ENCODE measurements at regions of chr5 and their contacts with region 1.

Region 1: DNA sequence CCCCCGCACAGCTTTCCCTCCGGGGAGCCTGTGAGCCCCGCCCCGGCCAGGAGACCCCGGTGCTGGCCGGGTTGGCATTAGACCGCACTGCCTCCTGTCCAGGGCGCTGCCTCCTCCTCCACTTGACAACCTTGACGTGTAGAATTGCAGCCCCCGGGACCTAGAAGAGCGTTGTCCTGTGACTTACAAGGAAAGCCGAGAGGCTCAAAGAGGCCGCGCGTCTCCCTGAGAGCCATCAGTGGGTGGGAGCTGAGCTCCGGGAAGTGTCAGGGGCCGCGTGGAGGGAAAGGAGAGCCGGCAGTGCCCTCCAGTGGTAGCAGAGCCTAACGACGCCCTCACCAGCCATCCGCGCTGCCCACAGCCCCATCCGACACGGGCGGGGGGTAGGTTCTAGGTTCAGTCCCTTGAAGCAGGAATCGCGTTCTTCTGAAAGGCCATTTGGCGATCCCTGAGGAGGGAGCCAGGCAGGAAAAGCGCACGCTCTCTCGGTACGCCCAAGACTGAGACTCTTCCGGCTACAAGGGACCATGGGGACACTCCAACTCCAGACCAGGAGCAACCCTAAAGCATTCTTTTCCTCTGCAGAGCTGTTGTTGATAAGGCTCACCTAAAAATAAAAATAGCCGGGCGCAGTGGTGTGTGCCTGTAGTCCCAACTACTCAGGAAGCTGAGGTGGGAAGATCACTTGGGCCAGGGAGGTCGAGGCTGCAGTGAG is 40.6 kb upstream of the SAP30L start:
- DNase-seq: peak; percentile 85
- H3K4me3 ChIP-seq: peak overlapping the region; percentile 32
- H3K27ac ChIP-seq: no peak overlapping the region
- H3K4me1 ChIP-seq: no peaks in the 10 kb centered on the region
- H3K27me3 ChIP-seq: no peaks in the 10 kb centered on the region
- CTCF ChIP-seq: peak; percentile 77

Region 2: GRCh38 chr5:154189819-154190594 is 215.2 kb before region 1 on chr5:
- CTCF ChIA-PET with region 1: interaction called, 10 read pairs
- POLR2A ChIA-PET with region 1: interaction called, 4 read pairs
- intact Hi-C with region 1: loop called (anchors 2 kb)
- DNase-seq: peak; percentile 76
- H3K4me3 ChIP-seq: peak overlapping the region; percentile 73
- H3K27ac ChIP-seq: peak overlapping the region; percentile 87
- H3K4me1 ChIP-seq: peaks cover 9% of the 10 kb centered on the region
- H3K27me3 ChIP-seq: peaks cover 6% of the 10 kb centered on the region
- CTCF ChIP-seq: peak; percentile 53

Region 3: GRCh38 chr5:154701110-154701572 is 295.9 kb after region 1 on chr5:
- CTCF ChIA-PET with region 1: no interaction called
- POLR2A ChIA-PET with region 1: no interaction called
- intact Hi-C with region 1: no loop called
- DNase-seq: no peak
- H3K4me3 ChIP-seq: no peak overlapping the region
- H3K27ac ChIP-seq: no peak overlapping the region
- H3K4me1 ChIP-seq: no peaks in the 10 kb centered on the region
- H3K27me3 ChIP-seq: no peaks in the 10 kb centered on the region
- CTCF ChIP-seq: no peak

Measured in A673 (cell line).